Right ventricle myocardium superior (tissue), 1 donor: ENCODE measurements at regions of chr2 and their contacts with region 1.

Region 1: GRCh38 chr2:213151437-213152064 is at the start of gene IKZF2:
- DNase-seq: peak; percentile 91
- ATAC-seq: peak; percentile 97
- total RNA-seq, gene IKZF2: 4.3 TPM

Region 2: DNA sequence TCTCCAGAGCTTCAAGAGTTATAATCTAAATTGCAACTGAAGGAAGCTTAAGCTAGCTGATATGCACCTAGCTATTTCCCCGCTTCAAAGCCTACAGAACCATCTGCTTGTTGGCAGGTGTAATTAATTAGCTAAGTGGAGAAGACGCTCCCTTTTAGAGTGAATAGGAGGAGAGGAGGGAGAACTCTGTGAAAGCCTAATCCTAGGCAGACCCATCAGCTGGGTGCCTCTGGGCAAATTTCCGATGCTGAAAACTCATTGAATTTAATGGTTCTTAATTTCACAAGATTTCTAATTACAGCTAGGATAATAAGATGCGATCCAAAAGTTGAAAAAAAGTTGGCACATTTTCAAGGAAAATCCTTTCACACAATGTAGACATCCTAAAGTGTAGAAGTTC is 1348.9 kb before region 1 on chr2:
- intact Hi-C with region 1: no loop called
- DNase-seq: no peak
- ATAC-seq: no peak

Region 3: GRCh38 chr2:212686285-212686895 is 465.2 kb before region 1 on chr2:
- intact Hi-C with region 1: loop called (anchors 5 kb)
- DNase-seq: peak; percentile 37
- ATAC-seq: no peak

Region 4: GRCh38 chr2:213246497-213247281 is 95.1 kb after region 1 on chr2:
- intact Hi-C with region 1: no loop called
- DNase-seq: no peak
- ATAC-seq: no peak